ENCODE measurements at regions of chr22 and their contacts with region 1.

Region 1: DNA sequence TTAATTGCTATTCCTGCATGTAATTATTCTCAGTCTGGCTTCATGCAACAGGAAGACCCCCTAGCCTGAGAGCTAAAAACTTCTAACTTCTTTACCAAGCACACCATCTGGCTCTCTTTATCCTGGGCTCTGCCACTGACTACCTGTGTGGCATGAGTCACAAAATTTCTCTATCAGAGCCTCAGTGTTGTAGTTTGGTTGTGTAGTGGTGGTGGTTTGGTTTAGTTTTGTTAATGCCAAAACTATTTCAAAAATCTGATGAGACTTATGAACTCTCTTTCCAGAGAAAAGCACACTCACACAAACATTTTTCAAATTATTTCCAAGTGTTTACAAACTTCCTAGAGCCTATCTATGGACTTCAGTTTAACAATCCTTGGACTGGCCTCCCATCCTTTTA is 7.5 kb upstream of the IL17RA start:
- DNase-seq: no peak
- ATAC-seq: no peak
- H3K4me3 ChIP-seq: no peak overlapping the region
- H3K27ac ChIP-seq: no peak overlapping the region
- H3K4me1 ChIP-seq: peaks cover 3% of the 10 kb centered on the region
- H3K27me3 ChIP-seq: no peaks in the 10 kb centered on the region
- CTCF ChIP-seq: no peak
- POLR2A ChIP-seq: no peak

Region 2: GRCh38 chr22:17496841-17497240 is 419.6 kb after region 1 on chr22:
- intact Hi-C with region 1: loop called (anchors 5 kb)
- DNase-seq: no peak
- ATAC-seq: no peak
- H3K4me3 ChIP-seq: no peak overlapping the region
- H3K27ac ChIP-seq: no peak overlapping the region
- H3K4me1 ChIP-seq: no peaks in the 10 kb centered on the region
- H3K27me3 ChIP-seq: no peaks in the 10 kb centered on the region
- CTCF ChIP-seq: no peak
- POLR2A ChIP-seq: no peak

Region 3: DNA sequence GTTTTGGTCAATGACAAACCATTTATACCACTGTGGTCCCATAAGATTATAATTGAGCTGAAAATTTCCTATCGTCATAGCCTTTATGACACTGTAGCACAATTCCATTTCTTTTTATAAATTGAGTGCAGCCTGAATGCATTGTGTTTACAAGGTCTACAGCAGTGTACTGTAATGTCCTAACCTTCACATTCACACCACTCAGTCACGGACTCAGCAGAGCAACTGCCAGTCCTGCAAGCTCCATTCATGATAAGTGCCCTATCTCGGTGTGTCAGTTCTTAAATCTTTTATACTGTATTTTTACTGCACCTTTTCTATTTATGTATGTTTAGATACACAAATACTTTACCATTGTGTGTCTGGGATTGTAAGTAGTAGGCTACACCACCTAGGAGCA is 430.9 kb after region 1 on chr22:
- intact Hi-C with region 1: loop called (anchors 5 kb)
- DNase-seq: no peak
- ATAC-seq: no peak
- H3K4me3 ChIP-seq: no peak overlapping the region
- H3K27ac ChIP-seq: no peak overlapping the region
- H3K4me1 ChIP-seq: no peaks in the 10 kb centered on the region
- H3K27me3 ChIP-seq: no peaks in the 10 kb centered on the region
- CTCF ChIP-seq: no peak
- POLR2A ChIP-seq: no peak